Activated naive CD4-positive, alpha-beta T cell treated with anti-CD3 and anti-CD28 coated beads for 36 hours (primary cell): ENCODE measurements at regions of chr16 and their contacts with region 1.

Region 1: DNA sequence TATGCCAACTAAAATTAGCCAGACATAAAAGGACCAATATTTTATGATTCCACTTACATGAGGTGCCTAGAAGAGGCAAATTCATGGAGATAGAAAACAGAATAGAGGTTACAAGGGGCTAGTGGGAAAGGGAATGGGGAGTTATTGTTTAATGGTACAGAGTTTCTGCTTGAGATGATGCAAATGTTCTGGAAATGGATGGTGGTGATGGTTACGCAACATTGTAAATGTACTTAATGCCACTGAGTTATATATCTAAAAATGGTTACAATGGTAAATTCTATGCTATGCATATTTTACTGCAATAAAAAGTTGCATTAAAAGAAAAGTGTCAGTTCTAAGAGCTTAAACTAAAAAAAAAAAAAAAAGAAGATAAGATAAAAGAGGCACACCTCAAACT is 17.9 kb downstream of the MT1X start:
- DNase-seq: no peak
- H3K4me3 Mint-ChIP-seq: no peak overlapping the region
- H3K27ac Mint-ChIP-seq: no peak overlapping the region
- H3K4me1 Mint-ChIP-seq: peaks cover 4% of the 10 kb centered on the region
- H3K27me3 Mint-ChIP-seq: no peaks in the 10 kb centered on the region

Region 2: GRCh38 chr16:56356276-56357240 is 343.6 kb before region 1 on chr16:
- CTCF ChIA-PET with region 1: no interaction called
- intact Hi-C with region 1: loop called (anchors 5 kb)
- DNase-seq: peak; percentile 68
- H3K4me3 Mint-ChIP-seq: peak overlapping the region; percentile 74
- H3K27ac Mint-ChIP-seq: peak overlapping the region; percentile 86
- H3K4me1 Mint-ChIP-seq: peaks cover 31% of the 10 kb centered on the region
- H3K27me3 Mint-ChIP-seq: no peaks in the 10 kb centered on the region

Region 3: DNA sequence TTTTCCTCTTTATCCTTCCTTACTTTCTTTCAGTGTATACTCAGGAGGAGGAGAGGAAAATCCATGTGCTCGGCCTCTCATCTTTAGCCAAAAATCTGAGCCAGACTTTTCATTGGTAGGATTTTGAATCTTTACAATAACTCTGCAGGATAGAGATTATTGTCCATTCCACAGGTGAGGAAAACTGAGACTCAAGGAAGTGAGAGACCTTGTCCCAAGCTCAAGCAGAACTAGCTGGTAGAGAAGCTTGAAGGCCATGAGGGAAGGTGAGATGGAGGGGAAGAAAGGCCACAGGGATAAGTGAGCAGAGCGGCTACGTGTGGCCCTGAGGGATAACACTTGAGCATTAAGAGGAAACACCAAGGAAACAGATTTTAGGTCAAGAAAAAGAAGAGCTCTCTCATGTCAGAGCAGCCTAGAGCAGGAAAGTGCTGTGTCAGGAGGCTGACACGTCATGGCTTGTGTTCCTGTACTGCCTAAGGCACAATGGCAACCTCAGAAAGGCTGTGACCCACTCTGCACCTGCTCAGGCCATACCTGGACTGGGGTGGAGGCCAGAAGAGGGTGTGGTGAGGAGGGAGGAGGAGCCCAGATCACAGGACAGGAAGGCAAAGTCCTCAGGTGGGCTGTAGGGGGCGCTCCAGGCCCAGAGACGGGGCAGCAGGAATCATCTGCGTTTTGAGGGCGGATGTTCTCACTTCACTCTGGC is 123.5 kb before region 1 on chr16:
- CTCF ChIA-PET with region 1: interaction called, 126 read pairs
- intact Hi-C with region 1: loop called (anchors 1 kb)
- DNase-seq: peak; percentile 95
- H3K4me3 Mint-ChIP-seq: no peak overlapping the region
- H3K27ac Mint-ChIP-seq: peak overlapping the region; percentile 30
- H3K4me1 Mint-ChIP-seq: peaks cover 4% of the 10 kb centered on the region
- H3K27me3 Mint-ChIP-seq: no peaks in the 10 kb centered on the region

Region 4: GRCh38 chr16:56600398-56600999 is 99.7 kb before region 1 on chr16:
- CTCF ChIA-PET with region 1: interaction called, 57 read pairs
- intact Hi-C with region 1: loop called (anchors 1 kb)
- DNase-seq: peak; percentile 44
- H3K4me3 Mint-ChIP-seq: no peak overlapping the region
- H3K27ac Mint-ChIP-seq: no peak overlapping the region
- H3K4me1 Mint-ChIP-seq: peaks cover 4% of the 10 kb centered on the region
- H3K27me3 Mint-ChIP-seq: peaks cover 5% of the 10 kb centered on the region

Region 5: GRCh38 chr16:56657555-56658326 is 42.5 kb before region 1 on chr16 and contains the start of gene MT1F:
- CTCF ChIA-PET with region 1: interaction called, 13 read pairs
- intact Hi-C with region 1: loop called (anchors 5 kb)
- DNase-seq: peak; percentile 83
- H3K4me3 Mint-ChIP-seq: peak within 1 kb of the TSS; percentile 91
- H3K27ac Mint-ChIP-seq: peak within 1 kb of the TSS; percentile 41
- H3K4me1 Mint-ChIP-seq: peaks cover 18% of the 10 kb centered on the region
- H3K27me3 Mint-ChIP-seq: no peaks in the 10 kb centered on the region
- total RNA-seq, gene MT1F: 5.4 to 6.4 TPM

Region 6: DNA sequence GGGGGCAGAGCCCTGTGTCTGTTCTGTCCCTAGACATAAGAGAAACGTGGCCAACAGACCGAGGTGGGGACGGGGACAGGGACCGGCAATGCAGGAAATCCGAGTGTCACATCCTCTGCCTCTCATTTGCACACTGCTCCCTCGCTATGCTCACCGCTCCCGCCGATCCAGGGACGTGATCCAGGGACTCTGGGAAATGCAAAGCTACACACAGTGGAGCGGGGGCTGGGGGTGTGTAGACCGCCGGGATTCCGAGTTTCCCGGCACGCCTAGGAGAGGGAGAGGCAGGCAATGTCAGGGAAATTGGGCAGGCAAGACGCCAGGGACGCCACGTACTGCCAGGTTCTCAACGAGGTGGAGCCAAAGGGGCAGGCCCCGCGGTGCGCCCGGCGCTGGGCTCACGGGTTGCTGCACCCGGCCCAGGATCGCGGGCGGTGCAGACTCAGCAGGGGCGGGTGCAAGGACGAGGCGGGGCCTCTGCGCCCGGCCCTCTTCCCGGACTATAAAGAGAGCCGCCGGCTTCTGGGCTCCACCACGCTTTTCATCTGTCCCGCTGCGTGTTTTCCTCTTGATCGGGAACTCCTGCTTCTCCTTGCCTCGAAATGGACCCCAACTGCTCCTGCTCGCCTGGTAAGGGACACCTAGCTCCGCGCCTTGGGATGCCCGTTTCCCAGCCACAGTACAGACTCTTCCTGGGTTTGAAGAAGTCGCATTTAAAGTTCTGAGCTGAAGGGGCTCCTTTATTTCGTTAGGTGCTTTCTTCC is 18.1 kb before region 1 on chr16 and contains the start of gene MT1X:
- CTCF ChIA-PET with region 1: interaction called, 19 read pairs
- intact Hi-C with region 1: loop called (anchors 2 kb)
- DNase-seq: peak; percentile 95
- H3K4me3 Mint-ChIP-seq: peak within 1 kb of the TSS; percentile 92
- H3K27ac Mint-ChIP-seq: peak within 1 kb of the TSS; percentile 96
- H3K4me1 Mint-ChIP-seq: peaks cover 19% of the 10 kb centered on the region
- H3K27me3 Mint-ChIP-seq: no peaks in the 10 kb centered on the region
- total RNA-seq, gene MT1X: 49.9 to 57.9 TPM

Region 7: DNA sequence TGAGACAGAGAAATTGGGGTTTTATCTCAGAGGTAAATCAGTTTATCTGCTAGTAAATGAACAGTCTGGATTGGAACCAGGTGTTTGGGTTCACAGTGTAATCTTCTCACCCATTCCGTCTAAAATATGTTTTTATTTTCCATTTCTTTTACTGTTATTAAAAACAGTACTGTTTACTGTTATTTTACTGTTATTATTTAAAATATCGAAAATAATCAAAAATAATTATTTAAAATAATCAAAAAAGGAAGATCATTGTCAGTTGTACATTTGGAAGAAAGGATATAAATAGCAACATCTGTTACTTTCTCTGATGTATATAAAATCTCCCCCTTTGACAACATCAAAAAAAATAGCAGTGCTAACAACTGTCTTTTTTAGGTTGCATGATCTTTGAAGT is 41.2 kb after region 1 on chr16:
- CTCF ChIA-PET with region 1: no interaction called
- intact Hi-C with region 1: no loop called
- DNase-seq: no peak
- H3K4me3 Mint-ChIP-seq: no peak overlapping the region
- H3K27ac Mint-ChIP-seq: no peak overlapping the region
- H3K4me1 Mint-ChIP-seq: peaks cover 35% of the 10 kb centered on the region
- H3K27me3 Mint-ChIP-seq: no peaks in the 10 kb centered on the region

Region 8: GRCh38 chr16:57863434-57864160 is 1163.4 kb after region 1 on chr16:
- CTCF ChIA-PET with region 1: no interaction called
- intact Hi-C with region 1: no loop called
- DNase-seq: peak; percentile 22
- H3K4me3 Mint-ChIP-seq: no peak overlapping the region
- H3K27ac Mint-ChIP-seq: no peak overlapping the region
- H3K4me1 Mint-ChIP-seq: no peaks in the 10 kb centered on the region
- H3K27me3 Mint-ChIP-seq: peaks cover 14% of the 10 kb centered on the region